ENCODE measurements at regions of chr7 and their contacts with region 1.

Region 1: GRCh38 chr7:38195804-38196595 is 18.0 kb downstream of the STARD3NL start:
- DNase-seq: peak in 1 of 2 experiments; percentile 20
- ATAC-seq: peak; percentile 52 to 66; a peak in 4 of 6 replicates
- H3K4me3 ChIP-seq: no peak overlapping the region
- H3K27ac ChIP-seq: peak overlapping the region; percentile 53 to 78
- H3K4me1 ChIP-seq: peaks cover 38% of the 10 kb centered on the region
- CTCF ChIP-seq: no peak
- EP300 ChIP-seq: no peak
- POLR2A ChIP-seq: no peak
- RAD21 ChIP-seq: no peak

Region 2: GRCh38 chr7:38112075-38112474 is 83.9 kb before region 1 on chr7:
- CTCF ChIA-PET with region 1: no interaction called
- POLR2A ChIA-PET with region 1: no interaction called
- DNase-seq: no peak
- ATAC-seq: no peak
- H3K4me3 ChIP-seq: no peak overlapping the region
- H3K27ac ChIP-seq: no peak overlapping the region
- H3K4me1 ChIP-seq: no peaks in the 10 kb centered on the region
- CTCF ChIP-seq: no peak
- EP300 ChIP-seq: no peak
- POLR2A ChIP-seq: no peak
- RAD21 ChIP-seq: no peak

Region 3: DNA sequence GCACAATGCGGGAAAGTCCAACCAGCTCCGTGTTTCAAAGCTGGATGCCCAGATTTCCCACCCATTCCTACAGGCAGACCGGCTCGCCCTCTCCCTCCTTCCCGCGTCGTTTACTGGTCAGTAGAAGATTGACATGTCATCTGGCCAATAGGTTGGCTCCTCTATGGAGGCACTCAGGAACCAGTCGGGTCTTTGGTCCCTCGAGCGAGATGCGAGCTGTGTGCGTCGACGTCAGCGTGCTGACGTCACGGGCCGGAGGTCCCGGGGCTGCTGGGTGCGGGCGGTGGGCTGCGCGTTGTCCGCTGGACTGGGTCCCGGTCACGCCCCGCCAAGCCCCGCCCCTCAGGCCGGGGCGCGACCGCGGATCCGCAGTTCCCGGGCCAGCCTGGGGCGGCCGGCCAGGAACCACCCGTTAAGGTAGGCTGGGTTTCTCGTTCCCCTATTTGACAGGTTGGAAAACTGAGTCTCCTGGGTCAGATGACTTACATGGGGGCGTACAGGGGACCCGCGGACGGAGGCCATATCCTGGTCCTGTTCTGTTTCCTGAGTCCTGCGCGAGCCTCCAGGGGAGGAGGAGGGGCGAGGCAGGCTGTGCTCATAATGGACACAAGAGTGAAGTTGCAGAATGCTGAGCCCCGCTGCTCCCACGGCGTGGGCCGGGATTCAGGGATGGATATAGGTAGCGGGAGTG is 17.9 kb before region 1 on chr7 and contains the start of gene STARD3NL:
- CTCF ChIA-PET with region 1: interaction called, 3 read pairs
- POLR2A ChIA-PET with region 1: interaction called, 22 read pairs
- DNase-seq: peak; percentile 96 to 100
- ATAC-seq: peak; percentile 99
- H3K4me3 ChIP-seq: peak within 1 kb of the TSS; percentile 73
- H3K27ac ChIP-seq: peak within 1 kb of the TSS; percentile 91 to 94
- H3K4me1 ChIP-seq: peaks cover 25% of the 10 kb centered on the region
- CTCF ChIP-seq: no peak
- EP300 ChIP-seq: no peak
- POLR2A ChIP-seq: peak; percentile 66
- RAD21 ChIP-seq: no peak
- polyA plus RNA-seq, gene STARD3NL: 78.1 and 104 TPM in 2 replicates

Region 4: GRCh38 chr7:38222481-38223096 is 26.6 kb after region 1 on chr7:
- CTCF ChIA-PET with region 1: interaction called, 50 read pairs
- POLR2A ChIA-PET with region 1: interaction called, 3 read pairs
- DNase-seq: peak; percentile 48 to 67
- ATAC-seq: peak; percentile 81 to 84; a peak in 5 of 6 replicates
- H3K4me3 ChIP-seq: no peak overlapping the region
- H3K27ac ChIP-seq: no peak overlapping the region
- H3K4me1 ChIP-seq: peaks cover 4% of the 10 kb centered on the region; the same call in 2 of the 3 replicates
- CTCF ChIP-seq: peak; percentile 95
- EP300 ChIP-seq: no peak
- POLR2A ChIP-seq: no peak
- RAD21 ChIP-seq: peak; percentile 89 to 90